ENCODE measurements at regions of chr3 and their contacts with region 1.

Region 1: DNA sequence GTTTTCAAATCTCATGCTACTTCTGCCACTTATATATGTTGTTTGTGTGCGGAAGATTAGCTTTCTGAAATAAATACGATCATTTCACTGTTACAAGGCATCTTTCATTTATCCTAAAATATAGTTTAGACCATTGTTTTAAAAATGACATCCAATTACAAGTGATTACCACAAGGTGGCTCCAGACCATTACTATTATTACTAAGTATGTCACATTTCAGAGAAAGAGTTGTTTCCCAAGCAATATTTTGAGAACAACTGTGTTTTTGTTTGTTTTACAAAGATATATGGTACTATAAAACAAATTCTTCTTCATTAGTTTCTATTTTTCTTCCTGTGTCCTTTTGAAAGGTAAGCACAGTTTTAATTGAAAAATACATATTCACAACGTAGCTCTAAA is 136.0 kb upstream of the RAP2B start:
- DNase-seq: peak in 3 of 4 experiments; percentile 21 to 62 (median 36)
- ATAC-seq: no peak
- H3K4me3 ChIP-seq: no peak overlapping the region
- H3K27ac ChIP-seq: no peak overlapping the region
- H3K4me1 ChIP-seq: peaks cover 15 to 32% of the 10 kb centered on the region in 2 experiments; a peak in 4 of 5 replicates
- H3K27me3 ChIP-seq: no peaks in the 10 kb centered on the region
- CTCF ChIP-seq: peak in 2 of 3 experiments; percentile 43 to 76; a peak in 3 of 6 replicates
- EP300 ChIP-seq: no peak
- POLR2A ChIP-seq: no peak
- RAD21 ChIP-seq: peak; percentile 86 to 91

Region 2: GRCh38 chr3:153284282-153284938 is 258.4 kb after region 1 on chr3:
- CTCF ChIA-PET with region 1: no interaction called
- POLR2A ChIA-PET with region 1: no interaction called
- in situ Hi-C with region 1: loop called (anchors 25 kb)
- intact Hi-C with region 1: no loop called
- DNase-seq: peak in 2 of 4 experiments; percentile 35 to 67
- ATAC-seq: peak; percentile 88
- H3K4me3 ChIP-seq: no peak overlapping the region
- H3K27ac ChIP-seq: peak overlapping the region; percentile 25; the same call in 2 of the 3 replicates
- H3K4me1 ChIP-seq: peaks cover 0 to 23% of the 10 kb centered on the region in 2 experiments; a peak in 2 of 5 replicates
- H3K27me3 ChIP-seq: no peaks in the 10 kb centered on the region
- CTCF ChIP-seq: no peak
- EP300 ChIP-seq: peak; percentile 55; the same call in 1 of the 2 replicates
- POLR2A ChIP-seq: no peak
- RAD21 ChIP-seq: no peak; a peak in 1 of 4 replicates

Region 3: GRCh38 chr3:153595186-153595815 is 569.3 kb after region 1 on chr3:
- CTCF ChIA-PET with region 1: interaction called, 3 read pairs
- POLR2A ChIA-PET with region 1: no interaction called
- in situ Hi-C with region 1: no loop called
- intact Hi-C with region 1: loop called (anchors 1 kb)
- DNase-seq: peak in 2 of 4 experiments; percentile 23 to 37
- ATAC-seq: peak; percentile 83
- H3K4me3 ChIP-seq: no peak overlapping the region
- H3K27ac ChIP-seq: no peak overlapping the region
- H3K4me1 ChIP-seq: no peaks in the 10 kb centered on the region
- H3K27me3 ChIP-seq: no peaks in the 10 kb centered on the region
- CTCF ChIP-seq: peak; percentile 52 to 71 (median 64)
- EP300 ChIP-seq: no peak
- POLR2A ChIP-seq: no peak
- RAD21 ChIP-seq: peak; percentile 80 to 86

Region 4: DNA sequence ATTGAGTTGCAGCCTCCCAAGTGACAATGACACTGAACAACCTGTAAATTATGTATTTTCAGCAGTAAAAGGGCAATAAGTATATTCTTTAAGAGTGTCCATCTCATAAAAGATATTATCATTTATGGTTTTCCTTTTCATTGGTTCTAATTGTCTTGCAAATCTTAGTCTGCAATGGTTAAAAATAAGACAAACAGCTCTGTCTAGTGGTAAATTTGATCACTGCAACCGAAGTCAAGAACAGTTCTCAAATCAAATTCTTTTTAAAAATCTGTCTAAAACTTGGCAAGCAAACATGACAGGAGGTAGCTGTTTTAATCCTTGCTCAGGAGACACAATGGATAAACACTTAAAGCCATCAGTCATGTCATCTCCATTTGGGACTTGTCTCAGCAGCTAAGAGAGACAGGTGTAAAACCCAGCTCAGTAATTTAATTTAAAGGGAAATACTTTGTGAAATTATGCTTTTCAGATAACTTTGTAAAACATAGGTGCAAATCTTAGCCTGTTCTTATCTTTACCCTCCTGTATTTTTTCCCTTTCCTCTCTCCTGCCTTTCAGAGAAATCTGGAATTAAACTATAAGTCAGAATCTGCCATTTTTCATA is 944.8 kb after region 1 on chr3:
- CTCF ChIA-PET with region 1: no interaction called
- POLR2A ChIA-PET with region 1: no interaction called
- in situ Hi-C with region 1: no loop called
- intact Hi-C with region 1: loop called (anchors 5 kb)
- DNase-seq: no peak
- ATAC-seq: no peak
- H3K4me3 ChIP-seq: no peak overlapping the region
- H3K27ac ChIP-seq: no peak overlapping the region
- H3K4me1 ChIP-seq: no peaks in the 10 kb centered on the region
- H3K27me3 ChIP-seq: no peaks in the 10 kb centered on the region
- CTCF ChIP-seq: peak in 2 of 3 experiments; percentile 9 to 26; a peak in 2 of 6 replicates
- EP300 ChIP-seq: no peak
- POLR2A ChIP-seq: no peak
- RAD21 ChIP-seq: peak in 1 of 2 experiments; percentile 15; a peak in 1 of 4 replicates

Region 5: GRCh38 chr3:154252759-154253638 is 1227.0 kb after region 1 on chr3:
- CTCF ChIA-PET with region 1: interaction called, 3 read pairs
- POLR2A ChIA-PET with region 1: no interaction called
- in situ Hi-C with region 1: loop called (anchors 10 kb)
- intact Hi-C with region 1: loop called (anchors 5 kb)
- DNase-seq: peak; percentile 76 to 90 (median 80)
- ATAC-seq: peak; percentile 99
- H3K4me3 ChIP-seq: no peak overlapping the region
- H3K27ac ChIP-seq: no peak overlapping the region
- H3K4me1 ChIP-seq: no peaks in the 10 kb centered on the region
- H3K27me3 ChIP-seq: no peaks in the 10 kb centered on the region
- CTCF ChIP-seq: peak; percentile 91 to 97 (median 97)
- EP300 ChIP-seq: no peak
- POLR2A ChIP-seq: no peak
- RAD21 ChIP-seq: peak; percentile 76 to 86

Measured in K562 (cell line).